OCI-LY7 (cell line): ENCODE measurements at regions of chr14 and their contacts with region 1.

Region 1: DNA sequence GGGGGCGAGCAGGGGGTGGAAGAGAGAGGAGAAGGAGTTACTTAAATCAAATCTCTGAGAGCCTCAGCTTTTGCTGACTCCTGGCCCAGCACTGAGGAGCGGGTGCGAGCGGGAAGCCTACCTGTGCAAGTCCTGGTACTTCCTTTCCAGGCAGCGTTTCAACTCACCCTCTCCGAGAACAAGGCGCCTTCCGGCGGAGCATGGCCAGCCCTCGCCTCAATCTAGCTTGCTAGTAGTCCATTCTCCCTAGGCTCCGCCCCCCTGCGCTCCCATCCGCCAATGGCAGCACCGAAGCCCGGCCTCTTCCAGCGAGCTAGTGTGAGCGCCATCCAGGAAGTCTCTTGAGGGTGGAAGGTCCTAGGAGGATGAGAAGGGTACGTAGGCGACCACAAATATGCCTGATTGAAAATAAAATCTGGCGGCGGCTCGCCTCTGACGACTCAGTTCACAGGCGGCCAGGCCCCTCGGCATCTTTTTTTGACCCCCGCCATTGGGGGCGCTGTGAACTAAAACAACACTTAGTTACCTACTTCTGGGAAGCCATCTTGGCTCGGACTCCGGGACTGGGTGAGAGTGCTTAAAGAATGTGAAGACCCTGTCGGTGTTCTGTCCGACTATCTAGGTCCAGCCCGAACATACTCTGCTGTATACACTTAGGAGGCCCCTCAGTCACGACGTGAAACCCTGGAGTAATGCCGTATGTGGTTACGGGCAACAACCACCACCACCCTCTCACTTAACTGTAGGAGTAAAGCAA is at the start of gene CHD8:
- DNase-seq: peak; percentile 100
- H3K4me3 ChIP-seq: peak within 1 kb of the TSS; percentile 91
- H3K27ac ChIP-seq: peak within 1 kb of the TSS; percentile 73
- H3K4me1 ChIP-seq: peaks cover 18% of the 10 kb centered on the region
- CTCF ChIP-seq: peak; percentile 87
- total RNA-seq, gene CHD8: 64.1 and 69.2 TPM in 2 replicates

Region 2: GRCh38 chr14:21383848-21384493 is 72.1 kb before region 1 on chr14 and contains the start of gene SUPT16H:
- CTCF ChIA-PET with region 1: no interaction called
- POLR2A ChIA-PET with region 1: interaction called, 3 read pairs
- intact Hi-C with region 1: loop called (anchors 1 kb)
- DNase-seq: peak; percentile 97
- H3K4me3 ChIP-seq: peak within 1 kb of the TSS; percentile 87
- H3K27ac ChIP-seq: peak within 1 kb of the TSS; percentile 78
- H3K4me1 ChIP-seq: peaks cover 43% of the 10 kb centered on the region
- CTCF ChIP-seq: no peak; the same call in 1 of the 2 replicates
- total RNA-seq, gene SUPT16H: 100 and 106 TPM in 2 replicates

Region 3: DNA sequence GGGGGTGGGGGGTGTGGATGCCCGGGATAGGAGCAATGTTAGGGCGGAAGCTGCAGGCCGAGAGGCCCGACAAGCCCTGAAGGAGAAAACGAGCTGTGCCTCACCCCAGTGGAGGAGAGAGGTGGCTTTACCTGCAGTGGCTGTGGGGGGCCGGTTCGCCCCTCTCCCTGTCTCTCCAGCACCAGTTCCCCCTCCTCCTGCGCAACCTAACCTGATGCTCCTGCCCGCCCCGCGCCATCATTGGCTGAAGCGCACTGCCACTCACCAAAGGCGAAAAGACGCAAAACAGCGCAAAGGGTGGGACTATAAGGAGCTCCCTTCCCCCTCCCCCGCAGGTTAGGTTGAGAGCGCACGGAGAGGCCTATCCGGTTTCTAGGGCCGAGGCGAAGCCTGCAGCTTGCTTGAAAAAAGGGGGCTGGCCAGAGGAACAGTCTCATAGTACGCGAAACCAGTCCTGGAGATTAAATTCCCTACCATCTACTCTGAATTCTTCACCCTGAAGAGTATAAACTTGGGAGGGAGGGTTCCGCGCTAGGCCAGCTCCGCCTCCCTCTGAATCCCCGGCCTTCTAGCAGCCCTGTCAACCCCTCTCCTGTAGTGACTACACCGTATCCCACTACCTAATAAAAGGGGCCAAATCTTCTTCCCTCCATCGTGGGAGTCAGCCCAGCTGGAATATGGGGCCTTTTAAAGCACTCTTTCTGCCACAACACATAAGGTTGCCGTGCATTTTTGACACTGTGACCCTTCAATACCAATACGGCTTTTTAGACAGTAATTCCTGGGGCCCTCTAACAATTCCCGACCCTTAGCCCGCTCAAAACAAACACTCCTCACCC is 18.8 kb before region 1 on chr14:
- CTCF ChIA-PET with region 1: interaction called, 3 read pairs
- POLR2A ChIA-PET with region 1: interaction called, 35 read pairs
- intact Hi-C with region 1: loop called (anchors 1 kb)
- DNase-seq: peak; percentile 100
- H3K4me3 ChIP-seq: peak overlapping the region; percentile 81
- H3K27ac ChIP-seq: peak overlapping the region; percentile 36
- H3K4me1 ChIP-seq: peaks cover 21% of the 10 kb centered on the region
- CTCF ChIP-seq: no peak

Region 4: GRCh38 chr14:21476925-21477681 is 21.0 kb after region 1 on chr14 and contains the starts of genes RAB2B and TOX4:
- CTCF ChIA-PET with region 1: no interaction called
- POLR2A ChIA-PET with region 1: interaction called, 31 read pairs
- intact Hi-C with region 1: loop called (anchors 1 kb)
- DNase-seq: peak; percentile 98
- H3K4me3 ChIP-seq: peak within 1 kb of the TSS; percentile 93
- H3K27ac ChIP-seq: peak within 1 kb of the TSS; percentile 58
- H3K4me1 ChIP-seq: peaks cover 16% of the 10 kb centered on the region
- CTCF ChIP-seq: peak; percentile 89
- total RNA-seq, gene RAB2B: 14.4 and 14.5 TPM in 2 replicates
- total RNA-seq, gene TOX4: 17.6 and 26.1 TPM in 2 replicates

Region 5: GRCh38 chr14:21498553-21499526 is 42.8 kb after region 1 on chr14:
- CTCF ChIA-PET with region 1: interaction called, 5 read pairs
- POLR2A ChIA-PET with region 1: interaction called, 8 read pairs
- intact Hi-C with region 1: loop called (anchors 2 kb)
- DNase-seq: peak; percentile 80
- H3K4me3 ChIP-seq: no peak overlapping the region
- H3K27ac ChIP-seq: no peak overlapping the region
- H3K4me1 ChIP-seq: no peaks in the 10 kb centered on the region
- CTCF ChIP-seq: peak; percentile 89

Region 6: DNA sequence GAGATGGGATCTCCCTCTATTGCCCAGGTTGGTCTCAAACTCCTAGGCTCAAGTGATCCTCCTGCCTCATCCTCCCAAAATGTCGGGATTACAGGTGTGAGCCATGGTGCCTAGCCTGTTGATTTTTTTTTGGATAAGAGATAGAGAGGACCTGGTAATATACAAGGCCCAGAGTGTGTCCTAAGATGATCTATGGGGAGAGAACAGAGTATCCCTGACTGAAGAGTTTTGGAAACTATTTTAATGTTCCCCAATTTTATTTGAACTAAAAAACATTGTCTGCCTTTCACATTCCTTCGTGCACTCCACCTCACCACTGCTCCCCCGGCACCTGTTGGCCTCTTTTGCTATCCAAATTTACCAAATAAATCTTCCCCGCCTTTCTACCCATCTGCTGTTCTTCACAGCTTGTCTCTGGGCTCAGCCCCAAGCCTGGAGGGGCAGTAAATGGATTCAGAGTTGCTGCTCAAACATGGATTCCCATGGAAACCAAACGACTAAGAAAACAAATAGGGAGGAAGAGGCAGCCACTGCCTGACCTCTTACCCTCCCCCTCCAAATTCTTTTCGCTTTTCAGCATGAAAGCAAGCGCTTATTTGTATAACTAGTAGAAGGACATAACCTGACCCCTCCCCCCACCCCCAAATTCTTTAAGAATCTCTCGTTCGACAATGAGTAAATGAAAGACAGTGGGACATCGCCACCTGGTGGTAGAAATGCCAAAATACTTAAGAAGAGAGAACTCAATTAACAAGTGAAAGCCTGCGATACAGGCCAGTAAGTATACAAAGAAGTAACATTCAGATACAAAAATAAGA is 101.2 kb after region 1 on chr14:
- CTCF ChIA-PET with region 1: no interaction called
- POLR2A ChIA-PET with region 1: interaction called, 8 read pairs
- intact Hi-C with region 1: loop called (anchors 1 kb)
- DNase-seq: peak; percentile 90
- H3K4me3 ChIP-seq: peak overlapping the region; percentile 36
- H3K27ac ChIP-seq: no peak overlapping the region
- H3K4me1 ChIP-seq: peaks cover 6% of the 10 kb centered on the region
- CTCF ChIP-seq: peak; percentile 94